ENCODE measurements at regions of chr6 and their contacts with region 1.

Region 1: GRCh38 chr6:38651121-38651784 is 11.5 kb upstream of the BTBD9 start:
- DNase-seq: no peak
- H3K4me3 Mint-ChIP-seq: no peak overlapping the region
- H3K27ac Mint-ChIP-seq: no peak overlapping the region
- H3K4me1 Mint-ChIP-seq: no peaks in the 10 kb centered on the region
- H3K27me3 Mint-ChIP-seq: no peaks in the 10 kb centered on the region

Region 2: GRCh38 chr6:38508894-38509293 is 142.4 kb before region 1 on chr6:
- CTCF ChIA-PET with region 1: no interaction called
- POLR2A ChIA-PET with region 1: no interaction called
- DNase-seq: no peak
- H3K4me3 Mint-ChIP-seq: no peak overlapping the region
- H3K27ac Mint-ChIP-seq: no peak overlapping the region
- H3K4me1 Mint-ChIP-seq: no peaks in the 10 kb centered on the region
- H3K27me3 Mint-ChIP-seq: no peaks in the 10 kb centered on the region

Region 3: GRCh38 chr6:38634518-38634917 is 16.7 kb before region 1 on chr6:
- CTCF ChIA-PET with region 1: interaction called, 3 read pairs
- POLR2A ChIA-PET with region 1: interaction called, 11 read pairs
- DNase-seq: no peak
- H3K4me3 Mint-ChIP-seq: no peak overlapping the region
- H3K27ac Mint-ChIP-seq: no peak overlapping the region
- H3K4me1 Mint-ChIP-seq: peaks cover 37% of the 10 kb centered on the region
- H3K27me3 Mint-ChIP-seq: no peaks in the 10 kb centered on the region

Region 4: DNA sequence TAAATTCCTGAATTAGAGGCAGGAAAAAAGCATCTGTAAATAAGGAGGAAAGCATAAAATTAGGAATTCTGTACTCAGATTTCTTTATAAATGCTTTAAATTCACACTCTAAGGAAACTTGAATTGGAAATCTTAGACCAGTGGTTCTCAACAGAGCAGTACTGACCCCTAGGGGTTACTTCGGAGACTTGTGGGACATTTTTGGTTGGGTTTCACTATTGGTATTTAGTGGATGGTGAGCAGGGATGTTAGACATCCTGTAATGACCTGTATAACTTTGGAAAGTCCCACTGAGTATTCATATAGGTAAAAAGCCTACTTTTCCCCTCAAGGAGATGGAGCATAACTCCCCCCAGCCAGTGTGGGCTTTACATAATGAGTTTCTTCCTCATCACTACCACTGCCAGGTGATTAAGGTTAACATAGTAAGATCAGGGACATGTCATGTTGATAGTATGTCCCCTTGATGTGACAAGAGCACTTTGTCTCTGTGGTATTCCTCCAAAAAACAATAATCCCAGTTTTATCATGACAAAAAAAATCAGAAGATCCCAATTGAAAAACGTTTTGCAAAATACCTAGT is 20.7 kb after region 1 on chr6:
- CTCF ChIA-PET with region 1: no interaction called
- POLR2A ChIA-PET with region 1: no interaction called
- DNase-seq: peak; percentile 45
- H3K4me3 Mint-ChIP-seq: no peak overlapping the region
- H3K27ac Mint-ChIP-seq: no peak overlapping the region
- H3K4me1 Mint-ChIP-seq: peaks cover 24% of the 10 kb centered on the region
- H3K27me3 Mint-ChIP-seq: no peaks in the 10 kb centered on the region